Activated T-helper 1 cell treated with anti-CD3 and anti-CD28 coated beads, Interleukin-12 subunit alpha, Interleukin-12 subunit beta, Interleukin-2, Interleukin-4 antibody, amounts not matched to agents 30 ng/mL and 10 ng/mL and 1 ng/mL, durations not matched to agents 14 hours and 24 hours and 36 hours (primary cell): ENCODE measurements at regions of chr6 and their contacts with region 1.

Region 1: DNA sequence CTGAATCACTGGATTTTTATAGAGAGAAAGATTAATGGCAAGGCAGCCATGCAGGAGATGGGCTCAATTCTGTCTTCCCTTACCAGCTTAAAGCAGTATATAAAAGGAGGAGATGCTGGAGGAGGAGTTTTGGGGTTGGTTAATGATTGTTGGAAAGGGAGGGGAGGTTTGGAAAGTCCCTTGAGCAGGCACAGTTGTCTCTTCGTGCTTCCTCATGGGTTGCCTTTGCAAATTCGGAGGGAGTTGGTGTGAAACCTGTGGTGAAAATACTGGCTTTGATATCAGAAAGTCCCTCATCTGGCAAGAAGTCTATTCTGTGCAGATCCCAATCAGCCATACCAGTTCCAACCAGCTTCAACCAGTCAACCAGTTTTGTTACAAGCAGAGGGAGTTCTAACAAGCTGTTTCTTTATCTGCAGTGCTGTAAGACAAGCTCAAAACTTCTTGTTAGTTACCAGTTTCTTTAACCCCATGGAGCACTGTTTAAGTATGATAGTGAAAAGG is 107.0 kb downstream of the HIVEP1 start:
- DNase-seq: peak; percentile 77
- H3K4me3 Mint-ChIP-seq: peak overlapping the region; percentile 36
- H3K27ac Mint-ChIP-seq: peak overlapping the region; percentile 83
- H3K4me1 Mint-ChIP-seq: peaks cover 67% of the 10 kb centered on the region
- H3K27me3 Mint-ChIP-seq: no peaks in the 10 kb centered on the region

Region 2: GRCh38 chr6:12051861-12052368 is 67.2 kb before region 1 on chr6:
- intact Hi-C with region 1: loop called (anchors 1 kb)
- DNase-seq: peak; percentile 76
- H3K4me3 Mint-ChIP-seq: peak overlapping the region; percentile 78
- H3K27ac Mint-ChIP-seq: peak overlapping the region; percentile 96
- H3K4me1 Mint-ChIP-seq: peaks cover 77% of the 10 kb centered on the region
- H3K27me3 Mint-ChIP-seq: no peaks in the 10 kb centered on the region

Region 3: GRCh38 chr6:12060780-12061619 is 58.1 kb before region 1 on chr6:
- intact Hi-C with region 1: loop called (anchors 1 kb)
- DNase-seq: peak; percentile 71
- H3K4me3 Mint-ChIP-seq: peak overlapping the region; percentile 83
- H3K27ac Mint-ChIP-seq: peak overlapping the region; percentile 94
- H3K4me1 Mint-ChIP-seq: peaks cover 78% of the 10 kb centered on the region
- H3K27me3 Mint-ChIP-seq: no peaks in the 10 kb centered on the region

Region 4: DNA sequence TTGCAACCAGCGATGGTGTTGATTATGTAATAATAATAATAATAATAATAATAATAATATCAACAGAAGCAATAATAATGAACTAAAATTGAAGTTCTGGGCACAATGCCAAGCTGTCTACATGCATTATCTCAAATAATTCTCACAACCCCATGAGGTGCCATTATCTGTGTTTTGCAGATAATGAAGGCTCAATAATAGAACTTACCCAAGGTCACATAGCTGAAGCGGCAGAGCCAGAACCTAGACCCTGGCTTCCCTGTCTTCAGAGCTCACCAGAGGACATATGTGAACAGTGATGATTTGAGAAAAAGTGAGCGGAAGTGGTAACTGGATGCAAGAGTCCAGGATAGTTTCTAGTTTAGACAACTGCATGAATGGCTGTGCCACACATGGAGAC is 16.0 kb before region 1 on chr6:
- intact Hi-C with region 1: loop called (anchors 1 kb)
- DNase-seq: no peak
- H3K4me3 Mint-ChIP-seq: no peak overlapping the region
- H3K27ac Mint-ChIP-seq: no peak overlapping the region
- H3K4me1 Mint-ChIP-seq: peaks cover 32% of the 10 kb centered on the region
- H3K27me3 Mint-ChIP-seq: no peaks in the 10 kb centered on the region